ENCODE measurements at regions of chr1 and their contacts with region 1.

Region 1: DNA sequence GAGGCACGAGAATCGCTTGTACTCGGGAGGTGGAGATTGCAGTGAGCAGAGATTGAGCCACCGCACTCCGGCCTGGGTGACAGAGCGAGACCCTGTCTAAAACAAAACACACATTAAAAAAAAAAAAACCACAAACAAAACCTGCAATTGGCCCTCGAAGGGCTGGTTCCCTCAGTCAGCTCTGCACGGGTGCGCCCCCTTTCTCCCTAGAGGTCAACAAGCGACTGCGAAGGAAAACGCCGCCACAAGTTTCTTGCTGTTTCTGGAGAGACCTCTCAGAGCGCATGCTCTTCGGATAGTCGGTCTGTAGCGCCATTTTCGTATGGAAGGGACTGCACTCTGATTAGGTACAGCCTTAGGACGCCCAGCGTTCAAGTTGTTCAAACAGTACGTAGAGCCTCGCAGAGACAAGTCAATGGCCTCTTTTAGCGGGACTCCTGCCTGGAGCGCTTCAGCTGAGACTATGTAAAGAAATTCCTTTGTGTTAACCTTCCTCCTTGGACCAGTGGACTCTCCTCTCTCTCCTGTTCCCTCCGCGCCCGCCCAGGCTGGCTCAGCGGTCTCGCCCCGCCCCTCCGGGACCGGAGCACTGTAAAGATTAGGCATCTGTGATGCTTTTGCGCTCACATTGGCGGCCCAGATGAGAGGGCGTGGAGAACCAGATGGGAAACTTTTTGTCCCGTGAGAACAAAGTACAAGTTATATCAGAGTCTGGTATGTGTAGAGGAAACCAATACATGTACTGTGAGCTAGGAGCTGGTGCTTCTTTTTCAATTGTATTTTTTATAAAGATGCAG is 1.0 kb upstream of the CDC14A start:
- DNase-seq: peak; percentile 91
- ATAC-seq: peak; percentile 58
- H3K4me3 ChIP-seq: peak overlapping the region; percentile 85 to 99 (median 97)
- H3K4me3 Mint-ChIP-seq: peak overlapping the region; percentile 91
- H3K27ac ChIP-seq: peak overlapping the region; percentile 52 to 87
- H3K27ac Mint-ChIP-seq: peak overlapping the region; percentile 92
- H3K4me1 ChIP-seq: peaks cover 10 to 16% of the 10 kb centered on the region in 2 donors
- H3K4me1 Mint-ChIP-seq: peaks cover 37% of the 10 kb centered on the region
- H3K27me3 ChIP-seq: no peaks in the 10 kb centered on the region
- H3K27me3 Mint-ChIP-seq: no peaks in the 10 kb centered on the region
- CTCF ChIP-seq: no peak

Region 2: GRCh38 chr1:99849744-99850458 is 501.4 kb before region 1 on chr1 and contains the start of gene AGL:
- CTCF ChIA-PET with region 1: no interaction called
- POLR2A ChIA-PET with region 1: interaction called, 4 read pairs
- intact Hi-C with region 1: loop called (anchors 1 kb)
- DNase-seq: peak; percentile 92
- ATAC-seq: peak; percentile 96
- H3K4me3 ChIP-seq: peak within 1 kb of the TSS; percentile 67 to 89 (median 77)
- H3K4me3 Mint-ChIP-seq: peak within 1 kb of the TSS; percentile 98
- H3K27ac ChIP-seq: peak within 1 kb of the TSS; percentile 71 to 84
- H3K27ac Mint-ChIP-seq: peak within 1 kb of the TSS; percentile 82
- H3K4me1 ChIP-seq: peaks cover 15 to 19% of the 10 kb centered on the region in 2 donors
- H3K4me1 Mint-ChIP-seq: peaks cover 25% of the 10 kb centered on the region
- H3K27me3 ChIP-seq: no peaks in the 10 kb centered on the region
- H3K27me3 Mint-ChIP-seq: no peaks in the 10 kb centered on the region
- CTCF ChIP-seq: no peak
- total RNA-seq, gene AGL: 18.7 and 21.7 TPM in 2 replicates

Region 3: DNA sequence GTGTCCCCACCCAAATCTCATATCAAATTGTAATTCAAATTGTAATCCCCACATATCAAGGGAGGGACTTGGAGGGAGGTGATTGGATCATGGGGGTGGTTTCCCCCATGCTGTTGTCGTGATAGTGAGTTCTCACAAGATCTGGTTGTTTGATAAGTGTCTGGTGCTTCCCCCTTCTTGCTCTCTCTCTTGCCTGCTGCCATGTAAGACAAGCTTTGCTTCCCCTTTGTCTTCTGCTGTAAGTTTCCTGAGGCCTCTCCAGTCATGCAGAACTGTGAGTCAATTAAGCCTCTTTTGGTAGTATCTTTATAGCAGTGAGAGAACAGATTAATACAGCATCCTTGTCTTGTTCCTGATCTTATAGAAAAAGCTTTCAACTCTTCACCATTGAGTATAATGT is 166.8 kb before region 1 on chr1:
- CTCF ChIA-PET with region 1: no interaction called
- POLR2A ChIA-PET with region 1: no interaction called
- intact Hi-C with region 1: loop called (anchors 1 kb)
- DNase-seq: peak; percentile 77
- ATAC-seq: peak; percentile 99
- H3K4me3 ChIP-seq: no peak overlapping the region
- H3K4me3 Mint-ChIP-seq: no peak overlapping the region
- H3K27ac ChIP-seq: peak overlapping the region; percentile 32 to 57
- H3K27ac Mint-ChIP-seq: peak overlapping the region; percentile 0
- H3K4me1 ChIP-seq: peaks cover 9 to 11% of the 10 kb centered on the region in 2 donors
- H3K4me1 Mint-ChIP-seq: peaks cover 10% of the 10 kb centered on the region
- H3K27me3 ChIP-seq: no peaks in the 10 kb centered on the region
- H3K27me3 Mint-ChIP-seq: no peaks in the 10 kb centered on the region
- CTCF ChIP-seq: no peak

Region 4: DNA sequence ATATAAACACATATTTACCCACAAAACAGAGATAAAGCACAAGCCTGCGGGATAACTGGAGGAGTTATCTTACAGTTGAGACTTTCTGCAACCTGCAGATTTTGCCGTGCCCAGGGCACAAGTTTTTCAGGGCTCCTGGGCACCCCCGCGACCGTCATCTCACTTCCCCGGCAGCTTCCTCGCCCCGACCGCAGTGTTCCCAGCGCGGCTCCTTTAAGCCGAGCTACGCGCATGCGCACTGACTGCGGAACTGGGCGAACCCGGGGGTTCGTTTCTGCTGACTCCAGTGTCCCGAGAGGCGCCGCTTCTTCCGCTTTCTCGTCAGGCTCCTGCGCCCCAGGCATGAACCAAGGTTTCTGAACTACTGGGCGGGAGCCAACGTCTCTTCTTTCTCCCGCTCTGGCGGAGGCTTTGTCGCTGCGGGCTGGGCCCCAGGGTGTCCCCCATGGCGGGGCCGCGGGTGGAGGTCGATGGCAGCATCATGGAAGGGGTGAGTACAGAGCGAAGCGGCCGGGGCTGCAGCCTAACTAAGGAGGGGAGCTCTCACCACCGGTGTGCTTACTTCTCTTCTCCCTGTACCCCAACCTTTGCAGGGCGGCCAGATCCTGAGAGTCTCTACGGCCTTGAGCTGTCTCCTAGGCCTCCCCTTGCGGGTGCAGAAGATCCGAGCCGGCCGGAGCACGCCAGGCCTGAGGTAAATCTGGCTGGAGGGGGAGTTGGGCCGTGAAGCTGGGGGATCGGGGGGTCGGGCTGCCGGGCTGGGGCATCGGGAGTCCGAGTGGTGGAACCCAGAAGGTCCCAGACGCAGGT is 85.2 kb before region 1 on chr1 and contains the start of gene RTCA:
- CTCF ChIA-PET with region 1: interaction called, 8 read pairs
- POLR2A ChIA-PET with region 1: interaction called, 8 read pairs
- intact Hi-C with region 1: loop called (anchors 1 kb)
- DNase-seq: peak; percentile 96
- ATAC-seq: peak; percentile 95
- H3K4me3 ChIP-seq: peak within 1 kb of the TSS; percentile 74 to 98 (median 94)
- H3K4me3 Mint-ChIP-seq: peak within 1 kb of the TSS; percentile 100
- H3K27ac ChIP-seq: peak within 1 kb of the TSS; percentile 58 to 81
- H3K27ac Mint-ChIP-seq: peak within 1 kb of the TSS; percentile 98
- H3K4me1 ChIP-seq: peaks cover 15 to 21% of the 10 kb centered on the region in 2 donors
- H3K4me1 Mint-ChIP-seq: peaks cover 38% of the 10 kb centered on the region
- H3K27me3 ChIP-seq: no peaks in the 10 kb centered on the region
- H3K27me3 Mint-ChIP-seq: no peaks in the 10 kb centered on the region
- CTCF ChIP-seq: no peak
- total RNA-seq, gene RTCA: 31.0 and 40.2 TPM in 2 replicates

Region 5: DNA sequence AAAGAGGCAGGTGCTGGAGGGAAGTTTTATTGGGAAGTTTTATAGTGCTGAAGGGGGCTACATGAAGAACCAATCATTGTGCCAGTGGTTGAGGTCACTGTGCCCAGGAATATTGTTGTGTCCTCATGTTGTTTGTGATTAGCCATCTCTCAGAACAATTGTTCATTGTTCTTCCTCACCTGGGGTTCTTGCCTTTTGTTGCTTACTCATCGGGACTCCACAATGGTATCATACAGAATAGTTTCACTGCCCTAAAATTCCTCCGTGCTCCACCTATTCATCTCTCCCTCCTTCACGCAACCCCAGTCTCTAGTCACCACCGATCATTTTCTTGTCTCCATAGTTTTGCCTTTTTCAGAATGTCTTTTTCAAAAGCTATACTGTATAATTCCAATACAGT is 37.9 kb before region 1 on chr1:
- CTCF ChIA-PET with region 1: no interaction called
- POLR2A ChIA-PET with region 1: no interaction called
- intact Hi-C with region 1: no loop called
- DNase-seq: no peak
- ATAC-seq: no peak
- H3K4me3 ChIP-seq: no peak overlapping the region
- H3K4me3 Mint-ChIP-seq: no peak overlapping the region
- H3K27ac ChIP-seq: no peak overlapping the region
- H3K27ac Mint-ChIP-seq: no peak overlapping the region
- H3K4me1 ChIP-seq: no peaks in the 10 kb centered on the region
- H3K4me1 Mint-ChIP-seq: peaks cover 2% of the 10 kb centered on the region
- H3K27me3 ChIP-seq: no peaks in the 10 kb centered on the region
- H3K27me3 Mint-ChIP-seq: no peaks in the 10 kb centered on the region
- CTCF ChIP-seq: no peak

Region 6: GRCh38 chr1:100895540-100896483 is 544.5 kb after region 1 on chr1 and contains the start of gene SLC30A7:
- CTCF ChIA-PET with region 1: no interaction called
- POLR2A ChIA-PET with region 1: no interaction called
- intact Hi-C with region 1: loop called (anchors 2 kb)
- DNase-seq: peak; percentile 95
- ATAC-seq: peak; percentile 87
- H3K4me3 ChIP-seq: peak within 1 kb of the TSS; percentile 75 to 99 (median 98)
- H3K4me3 Mint-ChIP-seq: peak within 1 kb of the TSS; percentile 94
- H3K27ac ChIP-seq: peak within 1 kb of the TSS; percentile 85 to 97
- H3K27ac Mint-ChIP-seq: peak within 1 kb of the TSS; percentile 94
- H3K4me1 ChIP-seq: peaks cover 10 to 11% of the 10 kb centered on the region in 2 donors
- H3K4me1 Mint-ChIP-seq: peaks cover 32% of the 10 kb centered on the region
- H3K27me3 ChIP-seq: no peaks in the 10 kb centered on the region
- H3K27me3 Mint-ChIP-seq: no peaks in the 10 kb centered on the region
- CTCF ChIP-seq: no peak
- total RNA-seq, gene SLC30A7: 26.7 and 28.6 TPM in 2 replicates